Endothelial cell of umbilical vein (primary cell): ENCODE measurements at regions of chr3 and their contacts with region 1.

Region 1: DNA sequence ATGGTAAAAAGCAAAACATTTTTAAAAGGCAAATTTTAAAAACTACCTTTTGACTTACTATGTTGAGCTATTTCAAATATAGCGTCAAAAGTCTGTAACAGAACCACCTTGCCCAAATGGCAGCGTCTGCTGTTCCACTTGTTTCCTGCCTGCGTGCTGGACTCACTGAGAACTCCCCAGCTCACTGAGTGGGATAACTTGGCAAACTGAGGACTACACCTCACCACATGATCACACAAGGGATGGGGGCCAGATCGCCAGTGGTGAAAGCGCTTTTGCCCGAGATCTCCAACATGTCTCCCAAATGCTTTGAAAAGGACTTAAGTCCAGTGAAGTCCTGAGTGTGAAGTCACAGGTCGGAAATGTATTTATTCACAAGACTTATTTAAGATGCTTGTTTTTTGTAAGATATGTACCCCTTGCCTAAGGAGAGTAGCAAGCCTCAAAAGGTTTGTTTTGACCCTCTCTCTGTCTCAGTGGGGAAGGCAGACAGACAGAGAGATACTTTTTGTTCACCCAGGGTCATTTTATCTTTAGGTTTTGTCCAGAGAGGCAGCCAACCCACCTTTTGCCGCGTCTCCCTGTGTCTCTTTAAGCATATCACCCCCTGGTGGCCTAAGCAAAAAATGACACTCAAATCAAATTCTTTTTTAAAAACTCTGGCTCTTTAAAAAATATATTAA is 192.6 kb downstream of the PDZRN3 start:
- DNase-seq: peak; percentile 42
- H3K4me3 ChIP-seq: no peak overlapping the region
- H3K27ac ChIP-seq: no peak overlapping the region
- H3K4me1 ChIP-seq: no peaks in the 10 kb centered on the region
- H3K27me3 ChIP-seq: no peaks in the 10 kb centered on the region
- CTCF ChIP-seq: peak; percentile 45 to 60
- POLR2A ChIP-seq: no peak

Region 2: DNA sequence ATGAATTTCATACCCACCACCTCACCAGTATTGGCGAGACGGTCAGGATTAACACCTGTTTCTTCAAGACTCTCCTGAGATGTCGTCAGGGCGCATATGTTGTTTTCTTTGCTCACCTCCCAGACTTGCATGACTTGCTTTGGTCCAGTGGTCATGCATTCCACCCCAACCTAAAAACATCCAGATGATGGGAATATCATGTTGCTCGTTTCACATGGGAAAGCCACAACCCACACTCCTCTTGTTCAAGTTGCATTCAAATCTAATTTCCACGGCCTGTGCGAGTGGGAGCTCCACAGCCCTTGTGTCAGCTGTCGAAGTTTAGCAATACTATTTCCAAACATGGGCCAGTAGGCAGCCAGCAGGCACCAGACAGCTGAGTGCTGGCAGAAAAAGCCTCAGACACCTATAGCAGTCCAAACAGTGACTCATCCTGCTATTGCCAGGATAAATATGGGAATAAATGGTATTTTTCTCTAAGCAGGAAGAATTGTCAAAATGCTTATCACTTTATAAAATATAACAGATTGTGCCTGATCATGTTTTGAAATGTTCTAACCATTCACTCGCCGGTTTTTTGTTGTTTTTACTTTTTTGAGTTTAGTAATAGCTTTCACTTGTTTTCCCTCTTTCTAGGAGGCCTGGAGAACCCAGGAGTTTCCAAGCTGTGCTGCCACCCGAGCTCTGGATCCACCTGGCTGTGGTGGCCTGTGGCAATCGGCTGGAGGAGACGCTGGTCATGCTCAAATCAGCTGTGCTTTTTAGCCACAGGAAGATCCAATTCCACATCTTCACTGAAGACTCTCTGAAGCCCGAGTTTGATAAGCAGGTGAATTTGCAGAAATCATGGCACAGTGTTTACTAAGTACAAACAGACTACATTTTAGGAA is 524.2 kb before region 1 on chr3:
- CTCF ChIA-PET with region 1: no interaction called
- POLR2A ChIA-PET with region 1: no interaction called
- dilution Hi-C with region 1: no loop called
- intact Hi-C with region 1: loop called (anchors 10 kb)
- DNase-seq: peak; percentile 65
- H3K4me3 ChIP-seq: no peak overlapping the region
- H3K27ac ChIP-seq: no peak overlapping the region
- H3K4me1 ChIP-seq: peaks cover 10% of the 10 kb centered on the region
- H3K27me3 ChIP-seq: peaks cover 0 to 4% of the 10 kb centered on the region in 2 experiments
- CTCF ChIP-seq: no peak
- POLR2A ChIP-seq: no peak

Region 3: DNA sequence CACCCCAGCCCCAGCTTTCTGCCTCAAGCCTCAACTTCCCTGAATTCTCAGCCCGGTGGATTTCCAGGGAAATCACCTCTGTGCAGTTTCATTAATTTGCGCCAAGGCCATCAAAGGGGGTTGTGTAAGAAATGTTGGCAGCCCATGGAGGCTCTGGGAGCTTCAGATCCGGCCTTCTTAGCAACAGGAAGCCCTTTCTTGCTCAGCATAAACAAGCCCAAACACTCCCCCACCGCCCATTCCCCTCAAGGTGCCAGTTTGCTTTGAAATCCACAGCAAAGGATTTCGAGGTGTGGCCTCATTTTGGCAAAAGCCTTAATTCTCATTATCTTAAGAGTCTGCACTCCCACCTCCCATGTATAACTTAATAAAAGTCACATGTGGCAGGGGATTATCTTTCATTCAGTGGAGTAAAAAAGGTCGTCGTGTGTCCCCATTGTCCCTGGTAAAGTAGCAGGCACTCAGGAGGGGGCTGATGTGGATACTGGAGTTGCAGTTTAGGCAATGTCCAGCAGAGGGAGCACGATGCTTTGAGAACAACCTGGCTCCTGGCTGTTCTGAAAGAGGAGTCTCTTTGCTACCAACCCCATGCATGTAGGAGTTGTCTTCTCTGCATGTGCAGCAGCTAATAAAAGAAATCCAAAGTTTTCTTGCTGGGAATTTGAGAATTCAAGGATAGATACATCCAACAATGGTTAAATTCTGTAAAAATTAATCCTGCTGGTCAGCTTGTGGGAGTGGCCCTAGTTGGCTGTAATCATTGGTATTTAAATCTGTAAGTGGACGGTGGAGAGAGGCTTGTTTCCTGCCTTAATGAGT is 331.2 kb before region 1 on chr3:
- CTCF ChIA-PET with region 1: interaction called, 3 read pairs
- POLR2A ChIA-PET with region 1: no interaction called
- dilution Hi-C with region 1: no loop called
- intact Hi-C with region 1: loop called (anchors 1 kb)
- DNase-seq: peak; percentile 70
- H3K4me3 ChIP-seq: no peak overlapping the region
- H3K27ac ChIP-seq: no peak overlapping the region
- H3K4me1 ChIP-seq: no peaks in the 10 kb centered on the region
- H3K27me3 ChIP-seq: no peaks in the 10 kb centered on the region
- CTCF ChIP-seq: peak; percentile 79 to 86
- POLR2A ChIP-seq: no peak

Region 4: DNA sequence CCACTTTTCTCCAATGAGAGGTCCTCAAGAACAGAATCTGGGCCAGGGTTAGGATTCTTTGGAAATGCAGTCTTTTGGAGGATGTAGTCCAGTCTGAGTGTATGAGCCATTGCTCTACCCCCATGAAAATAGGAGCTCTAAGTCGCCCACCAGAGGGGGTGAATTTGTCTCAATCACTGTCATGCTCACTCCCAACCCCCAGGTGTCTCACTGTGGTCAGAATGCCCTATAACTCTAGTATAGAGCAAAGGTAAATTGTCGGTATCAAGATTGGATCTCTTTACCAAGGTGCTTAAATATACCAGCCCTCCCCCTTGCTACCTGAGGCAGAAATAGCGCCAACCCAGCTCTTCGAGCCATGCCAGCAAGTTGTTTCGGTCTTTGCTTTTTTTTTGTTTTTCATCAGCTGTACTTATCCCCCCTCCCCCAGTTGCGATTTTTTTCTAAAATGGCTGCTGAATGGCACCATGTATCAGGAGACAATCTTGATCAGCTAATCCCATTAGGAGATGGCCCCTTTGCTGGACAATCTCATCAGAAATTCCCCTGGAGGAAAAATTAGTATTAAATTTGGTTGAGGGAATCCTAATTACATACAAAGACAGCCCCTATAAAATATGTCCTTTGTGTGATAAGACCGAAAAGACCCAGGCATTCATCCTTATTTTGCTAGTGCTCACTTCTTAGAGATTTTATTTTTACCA is 240.0 kb before region 1 on chr3:
- CTCF ChIA-PET with region 1: interaction called, 3 read pairs
- POLR2A ChIA-PET with region 1: no interaction called
- dilution Hi-C with region 1: no loop called
- intact Hi-C with region 1: loop called (anchors 5 kb)
- DNase-seq: no peak
- H3K4me3 ChIP-seq: no peak overlapping the region
- H3K27ac ChIP-seq: no peak overlapping the region
- H3K4me1 ChIP-seq: no peaks in the 10 kb centered on the region
- H3K27me3 ChIP-seq: no peaks in the 10 kb centered on the region
- CTCF ChIP-seq: no peak
- POLR2A ChIP-seq: no peak

Region 5: GRCh38 chr3:73480187-73480672 is 48.1 kb after region 1 on chr3:
- CTCF ChIA-PET with region 1: no interaction called
- POLR2A ChIA-PET with region 1: no interaction called
- dilution Hi-C with region 1: no loop called
- intact Hi-C with region 1: no loop called
- DNase-seq: no peak
- H3K4me3 ChIP-seq: no peak overlapping the region
- H3K27ac ChIP-seq: no peak overlapping the region
- H3K4me1 ChIP-seq: no peaks in the 10 kb centered on the region
- H3K27me3 ChIP-seq: no peaks in the 10 kb centered on the region
- CTCF ChIP-seq: no peak
- POLR2A ChIP-seq: no peak

Region 6: GRCh38 chr3:73502609-73503583 is 70.7 kb after region 1 on chr3:
- CTCF ChIA-PET with region 1: no interaction called
- POLR2A ChIA-PET with region 1: no interaction called
- dilution Hi-C with region 1: no loop called
- intact Hi-C with region 1: loop called (anchors 2 kb)
- DNase-seq: peak; percentile 57
- H3K4me3 ChIP-seq: no peak overlapping the region
- H3K27ac ChIP-seq: no peak overlapping the region
- H3K4me1 ChIP-seq: no peaks in the 10 kb centered on the region
- H3K27me3 ChIP-seq: no peaks in the 10 kb centered on the region
- CTCF ChIP-seq: peak; percentile 64 to 65
- POLR2A ChIP-seq: no peak

Region 7: DNA sequence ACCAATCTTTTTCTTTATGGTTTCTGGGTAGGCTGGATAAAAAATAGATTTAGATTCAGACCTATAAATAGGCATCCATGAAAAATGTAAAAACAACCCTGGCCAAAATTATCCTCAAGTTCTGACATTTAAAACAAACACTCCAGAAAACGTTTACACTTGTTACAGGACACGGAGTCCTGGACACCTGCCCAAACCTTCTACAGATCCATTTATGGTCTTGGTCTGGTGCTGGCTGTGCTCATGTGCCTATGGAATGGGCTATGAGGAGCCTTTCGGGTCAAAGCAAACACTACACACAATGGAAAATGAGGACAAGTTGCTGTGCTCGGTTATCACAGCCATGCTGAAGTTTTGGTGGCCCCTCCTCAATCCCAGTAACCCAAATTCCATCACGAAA is 84.5 kb after region 1 on chr3:
- CTCF ChIA-PET with region 1: no interaction called
- POLR2A ChIA-PET with region 1: no interaction called
- dilution Hi-C with region 1: no loop called
- intact Hi-C with region 1: no loop called
- DNase-seq: no peak
- H3K4me3 ChIP-seq: no peak overlapping the region
- H3K27ac ChIP-seq: no peak overlapping the region
- H3K4me1 ChIP-seq: no peaks in the 10 kb centered on the region
- H3K27me3 ChIP-seq: no peaks in the 10 kb centered on the region
- CTCF ChIP-seq: no peak
- POLR2A ChIP-seq: no peak

Region 8: GRCh38 chr3:73580343-73580742 is 148.2 kb after region 1 on chr3:
- CTCF ChIA-PET with region 1: no interaction called
- POLR2A ChIA-PET with region 1: no interaction called
- dilution Hi-C with region 1: no loop called
- intact Hi-C with region 1: no loop called
- DNase-seq: no peak
- H3K4me3 ChIP-seq: no peak overlapping the region
- H3K27ac ChIP-seq: no peak overlapping the region
- H3K4me1 ChIP-seq: no peaks in the 10 kb centered on the region
- H3K27me3 ChIP-seq: no peaks in the 10 kb centered on the region
- CTCF ChIP-seq: no peak
- POLR2A ChIP-seq: no peak

Region 9: DNA sequence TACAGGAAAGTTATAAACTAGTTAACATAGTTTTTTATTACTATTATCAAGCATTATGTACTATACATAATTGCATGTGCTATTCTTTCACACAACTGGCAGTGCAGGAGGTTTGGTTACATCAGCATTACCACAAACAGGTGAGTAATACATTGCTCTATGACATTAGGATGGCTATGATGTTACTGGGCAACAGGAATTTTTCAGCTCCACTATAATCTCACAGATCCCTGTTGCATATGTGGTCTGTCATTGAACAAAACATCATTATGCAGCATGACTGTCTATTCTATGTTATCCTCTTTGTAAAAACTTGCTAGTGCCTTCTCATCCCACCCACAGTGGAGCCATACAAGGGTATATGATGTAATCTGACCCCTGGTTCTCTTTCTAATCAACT is 229.1 kb after region 1 on chr3:
- CTCF ChIA-PET with region 1: no interaction called
- POLR2A ChIA-PET with region 1: no interaction called
- dilution Hi-C with region 1: no loop called
- intact Hi-C with region 1: no loop called
- DNase-seq: no peak
- H3K4me3 ChIP-seq: no peak overlapping the region
- H3K27ac ChIP-seq: no peak overlapping the region
- H3K4me1 ChIP-seq: no peaks in the 10 kb centered on the region
- H3K27me3 ChIP-seq: no peaks in the 10 kb centered on the region
- CTCF ChIP-seq: no peak
- POLR2A ChIP-seq: no peak